Activated B cell treated with CpG ODN at 0.5 μM for 24 hours (primary cell): ENCODE measurements at regions of chr3 and their contacts with region 1.

Region 1: DNA sequence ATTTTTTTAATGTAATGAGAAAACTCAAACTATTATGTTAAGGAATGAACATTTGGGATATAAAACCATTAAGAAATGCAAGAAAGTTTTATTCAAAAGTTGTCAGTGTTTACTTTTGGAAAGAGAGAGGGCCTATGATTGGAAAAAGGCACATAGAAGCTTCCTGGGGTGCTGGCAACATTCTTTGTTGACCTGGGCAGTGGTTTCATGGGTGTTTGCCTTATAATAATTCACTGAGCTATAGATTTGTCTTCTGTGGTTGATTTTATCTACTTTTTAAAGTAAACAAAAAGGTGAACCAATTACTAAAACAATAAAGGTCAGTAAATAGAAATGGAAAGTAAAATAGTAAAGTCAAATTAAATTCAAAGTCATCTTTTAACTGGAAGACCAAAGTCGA is 308.9 kb downstream of the NEK10 start:
- DNase-seq: no peak
- ATAC-seq: no peak
- H3K4me3 Mint-ChIP-seq: no peak overlapping the region
- H3K27ac Mint-ChIP-seq: no peak overlapping the region
- H3K4me1 Mint-ChIP-seq: no peaks in the 10 kb centered on the region
- H3K27me3 Mint-ChIP-seq: peaks cover 3% of the 10 kb centered on the region
- CTCF ChIP-seq: no peak

Region 2: GRCh38 chr3:27010834-27011233 is 49.5 kb before region 1 on chr3:
- CTCF ChIA-PET with region 1: no interaction called
- POLR2A ChIA-PET with region 1: no interaction called
- intact Hi-C with region 1: loop called (anchors 10 kb)
- DNase-seq: no peak
- ATAC-seq: no peak
- H3K4me3 Mint-ChIP-seq: no peak overlapping the region
- H3K27ac Mint-ChIP-seq: no peak overlapping the region
- H3K4me1 Mint-ChIP-seq: no peaks in the 10 kb centered on the region
- H3K27me3 Mint-ChIP-seq: no peaks in the 10 kb centered on the region
- CTCF ChIP-seq: no peak

Region 3: DNA sequence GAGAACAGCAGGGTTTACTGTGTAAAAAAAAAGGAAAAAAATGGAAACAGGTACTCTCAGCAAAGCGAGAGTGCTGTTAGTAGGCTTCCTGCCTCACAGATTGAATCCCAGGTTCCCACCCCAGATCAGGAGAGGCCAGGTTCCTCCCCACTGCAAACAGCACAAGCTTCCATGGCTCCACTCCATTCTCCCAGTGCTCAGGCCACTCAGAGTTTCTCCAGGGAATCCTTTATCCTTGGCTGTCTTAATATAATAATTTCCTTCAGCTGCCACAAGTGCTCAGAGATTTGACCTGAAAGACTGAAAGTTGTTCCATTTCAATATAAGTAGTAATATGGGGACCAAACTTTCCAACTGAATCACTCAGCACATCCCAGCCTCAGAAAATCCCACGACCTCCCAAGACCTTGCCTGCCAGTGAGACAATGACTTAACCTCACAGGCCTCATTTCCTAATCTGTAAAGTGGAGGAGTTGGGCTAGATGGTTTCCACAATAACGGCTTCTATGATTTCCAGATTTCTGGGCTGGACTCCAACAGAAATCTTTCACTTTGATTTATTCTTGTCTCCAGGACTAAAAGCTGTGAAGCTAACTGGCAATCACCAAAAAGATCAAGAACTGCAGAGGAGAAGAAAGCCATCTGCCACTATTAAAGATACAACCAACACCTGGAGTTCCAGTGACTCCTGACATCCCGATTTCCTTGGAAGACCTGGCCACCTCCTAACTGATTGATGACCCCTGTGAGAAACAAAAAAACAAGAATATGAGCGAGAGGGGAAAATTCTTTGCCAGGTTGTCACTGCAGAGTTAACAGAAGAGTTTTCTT is 19.3 kb after region 1 on chr3:
- CTCF ChIA-PET with region 1: no interaction called
- POLR2A ChIA-PET with region 1: no interaction called
- intact Hi-C with region 1: no loop called
- DNase-seq: no peak
- ATAC-seq: no peak
- H3K4me3 Mint-ChIP-seq: no peak overlapping the region
- H3K27ac Mint-ChIP-seq: no peak overlapping the region
- H3K4me1 Mint-ChIP-seq: no peaks in the 10 kb centered on the region
- H3K27me3 Mint-ChIP-seq: no peaks in the 10 kb centered on the region
- CTCF ChIP-seq: no peak